Stomach (tissue), 19 donors: ENCODE measurements at regions of chr11 and their contacts with region 1.

Region 1: DNA sequence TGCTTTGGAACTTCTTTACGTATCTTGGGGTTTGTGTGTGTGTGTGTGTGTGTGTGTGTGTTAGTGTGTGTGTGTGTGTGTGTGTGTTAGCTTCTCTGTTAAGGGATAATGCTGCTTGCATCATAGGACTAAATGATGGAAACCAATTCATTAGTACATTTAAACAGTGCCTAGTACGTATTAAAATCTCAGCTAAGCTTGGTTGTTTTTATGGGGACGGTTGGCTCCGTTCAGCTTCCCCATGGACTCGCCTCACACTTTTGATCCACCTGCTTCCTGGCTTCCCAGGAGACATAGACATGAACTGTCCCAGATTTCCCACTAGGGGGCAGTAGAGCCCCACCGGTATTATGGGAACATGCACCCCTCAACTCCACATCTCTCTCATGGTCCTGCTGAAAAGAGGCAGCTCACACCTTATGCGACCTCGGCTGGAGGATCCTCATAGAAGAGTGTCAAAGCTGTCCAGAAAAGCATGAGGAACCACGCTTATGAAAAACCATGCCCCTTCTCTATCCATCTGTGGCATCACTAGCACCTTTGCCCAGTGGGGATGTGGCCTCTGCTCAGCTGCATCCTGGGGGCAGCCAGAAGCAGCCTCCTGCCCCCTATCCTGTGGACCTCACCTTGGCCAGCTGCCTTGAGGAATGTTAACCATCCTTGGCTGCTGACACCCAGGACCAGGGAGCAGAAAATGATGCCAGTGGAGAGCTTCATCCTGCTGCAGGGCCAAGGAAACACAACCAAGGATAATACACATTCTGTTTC is 9.7 kb upstream of the SAAL1 start:
- DNase-seq: peak; percentile 70 to 86
- H3K4me3 ChIP-seq: no peak overlapping the region
- H3K27ac ChIP-seq: no peak overlapping the region
- H3K4me1 ChIP-seq: no peaks in the 10 kb centered on the region
- H3K27me3 ChIP-seq: peaks cover 0 to 33% (median 0%) of the 10 kb centered on the region in 3 donors
- CTCF ChIP-seq: peak in 5 of 7 experiments; percentile 68 to 84 (median 82)
- EP300 ChIP-seq: no peak
- POLR2A ChIP-seq: no peak

Region 2: DNA sequence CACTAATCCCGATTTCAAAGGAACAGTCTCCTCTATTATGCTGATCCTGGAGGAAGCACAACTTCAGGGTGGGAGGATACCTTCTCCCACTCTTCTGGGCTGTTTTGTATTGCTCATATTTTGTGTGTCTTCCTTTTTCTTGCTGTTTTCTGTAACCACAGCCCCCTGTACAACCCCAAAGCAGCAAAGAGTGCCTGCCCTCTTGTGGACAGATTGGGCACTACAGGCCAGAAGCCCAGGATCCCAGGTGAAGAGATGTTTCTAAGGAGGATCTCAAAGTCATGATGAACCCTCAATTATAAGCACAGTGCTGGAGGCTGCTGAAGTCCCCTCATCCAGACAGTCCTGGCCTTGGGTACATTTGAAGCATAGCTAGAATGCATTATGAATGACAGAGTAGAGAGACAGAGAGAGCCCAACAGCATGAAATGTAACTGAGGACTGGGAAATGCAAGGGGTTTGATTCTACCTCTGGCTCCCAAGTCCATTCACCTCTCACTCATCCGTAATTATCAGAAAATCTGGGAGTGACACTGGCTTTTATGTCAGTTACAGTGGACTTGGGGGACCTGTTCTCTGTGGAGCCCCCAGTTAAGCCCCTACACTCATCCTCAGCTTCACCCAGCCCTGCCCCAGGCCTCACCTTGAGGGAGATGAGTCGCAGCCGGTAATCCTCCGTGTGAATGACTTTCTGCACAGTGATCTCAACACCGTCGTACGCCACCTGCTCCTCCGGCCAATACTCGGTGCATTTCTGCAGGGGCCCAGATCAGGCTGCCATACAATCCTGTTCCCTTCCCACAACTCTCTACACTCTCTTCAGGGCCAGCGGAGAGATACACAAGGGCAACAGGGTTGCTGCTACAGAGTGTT is 616.6 kb after region 1 on chr11:
- intact Hi-C with region 1: loop called (anchors 10 kb)
- DNase-seq: peak; percentile 63 to 80
- H3K4me3 ChIP-seq: no peak overlapping the region
- H3K27ac ChIP-seq: no peak overlapping the region
- H3K4me1 ChIP-seq: peaks cover 0 to 6% (median 5%) of the 10 kb centered on the region in 4 donors
- H3K27me3 ChIP-seq: peaks cover 0 to 12% (median 0%) of the 10 kb centered on the region in 3 donors
- CTCF ChIP-seq: peak in 6 of 7 experiments; percentile 79 to 98 (median 93)
- EP300 ChIP-seq: no peak
- POLR2A ChIP-seq: no peak